ENCODE measurements at regions of chr1 and their contacts with region 1.

Region 1: GRCh38 chr1:236603991-236604904 is at the start of gene HEATR1:
- DNase-seq: peak; percentile 88 to 92
- H3K4me3 ChIP-seq: peak within 1 kb of the TSS; percentile 71
- H3K27ac ChIP-seq: peak within 1 kb of the TSS; percentile 30
- H3K4me1 ChIP-seq: peaks cover 8% of the 10 kb centered on the region
- H3K27me3 ChIP-seq: no peaks in the 10 kb centered on the region
- CTCF ChIP-seq: no peak
- total RNA-seq, gene HEATR1: 34.3 and 43.0 TPM in 2 replicates

Region 2: GRCh38 chr1:236103646-236104218 is 500.5 kb before region 1 on chr1:
- CTCF ChIA-PET with region 1: no interaction called
- POLR2A ChIA-PET with region 1: no interaction called
- intact Hi-C with region 1: loop called (anchors 1 kb)
- DNase-seq: peak in 1 of 2 experiments; percentile 41
- H3K4me3 ChIP-seq: no peak overlapping the region
- H3K27ac ChIP-seq: no peak overlapping the region
- H3K4me1 ChIP-seq: no peaks in the 10 kb centered on the region
- H3K27me3 ChIP-seq: no peaks in the 10 kb centered on the region
- CTCF ChIP-seq: peak; percentile 96

Region 3: GRCh38 chr1:236142253-236143103 is 461.8 kb before region 1 on chr1 and contains the start of gene GPR137B:
- CTCF ChIA-PET with region 1: no interaction called
- POLR2A ChIA-PET with region 1: no interaction called
- intact Hi-C with region 1: no loop called
- DNase-seq: no peak
- H3K4me3 ChIP-seq: no peak within 1 kb of the TSS
- H3K27ac ChIP-seq: no peak within 1 kb of the TSS
- H3K4me1 ChIP-seq: no peaks in the 10 kb centered on the region
- H3K27me3 ChIP-seq: peaks cover 42% of the 10 kb centered on the region
- CTCF ChIP-seq: no peak
- total RNA-seq, gene GPR137B: not detected in 2 replicates

Region 4: DNA sequence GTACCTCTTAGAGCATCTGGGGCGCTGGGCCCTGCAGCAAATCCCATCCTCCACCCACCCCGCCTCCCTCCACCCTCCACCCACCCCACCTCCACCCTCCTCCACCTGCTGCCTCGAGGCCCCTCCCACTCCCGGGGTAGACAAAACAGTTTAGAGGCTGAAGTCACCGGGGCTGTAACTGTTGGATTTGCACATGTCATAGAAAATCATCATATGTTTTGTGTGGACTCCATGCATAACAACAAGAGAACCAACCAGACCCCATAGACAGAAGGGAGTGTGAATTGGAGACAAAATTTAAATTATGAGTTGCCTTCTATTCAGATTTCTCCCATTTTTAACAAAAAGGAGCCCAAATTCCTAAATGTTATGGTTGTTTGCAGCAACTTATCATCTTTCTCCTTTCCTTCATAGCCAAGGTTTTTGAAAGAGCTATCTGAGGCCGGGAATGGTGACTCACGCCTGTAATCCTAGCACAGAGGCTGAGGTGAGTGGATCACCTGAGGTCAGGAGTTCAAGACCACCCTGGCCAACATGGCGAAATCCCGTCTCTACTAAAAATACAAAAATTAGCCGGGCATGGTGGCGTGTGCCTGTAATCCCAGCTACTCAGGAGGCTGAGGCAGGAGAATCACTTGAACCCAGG is 108.7 kb before region 1 on chr1:
- CTCF ChIA-PET with region 1: no interaction called
- POLR2A ChIA-PET with region 1: no interaction called
- intact Hi-C with region 1: no loop called
- DNase-seq: no peak
- H3K4me3 ChIP-seq: no peak overlapping the region
- H3K27ac ChIP-seq: no peak overlapping the region
- H3K4me1 ChIP-seq: peaks cover 35% of the 10 kb centered on the region
- H3K27me3 ChIP-seq: no peaks in the 10 kb centered on the region
- CTCF ChIP-seq: no peak

Region 5: DNA sequence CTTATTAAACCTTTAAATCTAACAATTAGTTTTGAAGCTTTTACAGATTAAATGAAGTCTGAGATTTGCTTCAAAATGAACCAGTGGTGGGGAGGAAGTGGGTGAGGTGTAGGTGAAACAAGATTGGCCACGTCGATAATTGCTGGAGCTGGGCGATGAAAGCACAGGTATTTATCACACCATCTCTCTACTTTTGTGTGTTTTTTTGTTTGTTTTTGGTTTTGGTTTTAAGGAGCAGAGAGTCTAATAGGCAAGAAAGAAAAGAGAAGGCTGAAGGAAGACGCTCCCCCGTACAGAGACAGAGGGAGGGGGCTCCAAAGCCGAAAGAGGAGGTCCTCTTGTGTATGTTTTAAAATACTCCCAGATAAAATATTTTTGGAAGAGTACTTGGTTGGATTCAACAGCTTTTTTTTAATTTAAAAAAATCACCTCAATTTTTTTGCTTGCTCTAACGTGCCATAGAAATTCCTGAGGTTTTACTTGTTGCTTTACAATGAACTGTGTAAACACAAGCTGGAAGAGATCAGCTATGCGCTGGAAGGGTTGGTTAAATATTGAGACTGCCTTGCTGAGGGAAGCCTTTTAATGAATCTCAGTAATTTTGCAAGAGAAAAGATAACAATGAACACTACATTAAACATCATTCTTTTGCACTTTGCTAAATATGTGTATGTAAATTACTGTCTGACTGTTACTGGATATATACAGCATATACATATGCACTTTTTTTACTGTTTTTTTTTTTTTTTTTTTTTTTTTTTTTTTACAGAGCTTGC is 87.1 kb before region 1 on chr1:
- CTCF ChIA-PET with region 1: no interaction called
- POLR2A ChIA-PET with region 1: interaction called, 39 read pairs
- intact Hi-C with region 1: no loop called
- DNase-seq: peak; percentile 38 to 97
- H3K4me3 ChIP-seq: peak overlapping the region; percentile 42; the same call in 1 of the 2 replicates
- H3K27ac ChIP-seq: peak overlapping the region; percentile 93
- H3K4me1 ChIP-seq: peaks cover 50% of the 10 kb centered on the region
- H3K27me3 ChIP-seq: no peaks in the 10 kb centered on the region
- CTCF ChIP-seq: no peak

Region 6: DNA sequence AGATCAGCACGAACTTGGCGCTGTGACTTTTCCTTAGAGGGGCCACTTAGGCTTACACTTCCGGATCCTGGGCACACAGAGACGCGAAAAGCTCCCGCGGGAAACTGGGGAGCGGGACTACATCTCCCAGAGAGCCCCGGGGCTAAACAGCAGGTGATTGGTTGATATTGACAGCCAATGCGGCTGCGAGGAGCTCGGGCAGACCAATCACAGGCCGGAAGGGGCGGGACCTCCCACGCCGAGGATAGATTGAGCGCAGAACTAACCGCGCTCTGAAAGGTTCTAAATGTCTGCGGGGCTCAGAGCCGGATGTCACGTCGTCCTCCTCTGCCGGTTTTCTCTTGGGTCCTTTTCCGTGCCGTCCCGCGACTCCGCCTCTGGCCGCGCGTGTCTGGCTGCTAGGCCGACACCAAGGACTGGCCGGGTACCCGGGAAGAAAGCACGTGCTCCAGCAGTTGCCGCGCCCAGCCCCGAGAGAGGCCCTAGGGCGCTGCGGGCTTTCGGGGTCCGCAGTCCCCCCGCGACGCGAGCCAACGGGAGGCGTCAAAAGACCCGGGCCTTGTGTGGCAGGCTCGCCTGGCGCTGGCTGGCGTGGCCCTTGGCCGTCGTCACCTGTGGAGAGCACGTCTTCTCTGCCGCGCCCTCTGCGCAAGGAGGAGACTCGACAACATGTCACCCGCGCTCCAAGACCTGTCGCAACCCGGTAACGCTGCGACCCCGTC is 190.9 kb after region 1 on chr1 and contains the start of gene MTR:
- CTCF ChIA-PET with region 1: interaction called, 7 read pairs
- POLR2A ChIA-PET with region 1: interaction called, 7 read pairs
- intact Hi-C with region 1: loop called (anchors 10 kb)
- DNase-seq: peak; percentile 94
- H3K4me3 ChIP-seq: peak within 1 kb of the TSS; percentile 86
- H3K27ac ChIP-seq: peak within 1 kb of the TSS; percentile 51; the same call in 1 of the 2 replicates
- H3K4me1 ChIP-seq: peaks cover 5% of the 10 kb centered on the region; the same call in 1 of the 2 replicates
- H3K27me3 ChIP-seq: peaks cover 23% of the 10 kb centered on the region
- CTCF ChIP-seq: no peak
- total RNA-seq, gene MTR: 20.9 and 21.9 TPM in 2 replicates

Region 7: GRCh38 chr1:236868625-236869467 is 264.6 kb after region 1 on chr1:
- CTCF ChIA-PET with region 1: no interaction called
- POLR2A ChIA-PET with region 1: no interaction called
- intact Hi-C with region 1: loop called (anchors 1 kb)
- DNase-seq: peak; percentile 19 to 49
- H3K4me3 ChIP-seq: no peak overlapping the region
- H3K27ac ChIP-seq: no peak overlapping the region
- H3K4me1 ChIP-seq: no peaks in the 10 kb centered on the region
- H3K27me3 ChIP-seq: no peaks in the 10 kb centered on the region
- CTCF ChIP-seq: peak; percentile 97

Region 8: GRCh38 chr1:237386362-237387143 is 782.3 kb after region 1 on chr1:
- CTCF ChIA-PET with region 1: interaction called, 3 read pairs
- POLR2A ChIA-PET with region 1: no interaction called
- intact Hi-C with region 1: loop called (anchors 1 kb)
- DNase-seq: no peak
- H3K4me3 ChIP-seq: no peak overlapping the region
- H3K27ac ChIP-seq: no peak overlapping the region
- H3K4me1 ChIP-seq: no peaks in the 10 kb centered on the region
- H3K27me3 ChIP-seq: peaks cover 34% of the 10 kb centered on the region
- CTCF ChIP-seq: peak; percentile 79

Region 9: DNA sequence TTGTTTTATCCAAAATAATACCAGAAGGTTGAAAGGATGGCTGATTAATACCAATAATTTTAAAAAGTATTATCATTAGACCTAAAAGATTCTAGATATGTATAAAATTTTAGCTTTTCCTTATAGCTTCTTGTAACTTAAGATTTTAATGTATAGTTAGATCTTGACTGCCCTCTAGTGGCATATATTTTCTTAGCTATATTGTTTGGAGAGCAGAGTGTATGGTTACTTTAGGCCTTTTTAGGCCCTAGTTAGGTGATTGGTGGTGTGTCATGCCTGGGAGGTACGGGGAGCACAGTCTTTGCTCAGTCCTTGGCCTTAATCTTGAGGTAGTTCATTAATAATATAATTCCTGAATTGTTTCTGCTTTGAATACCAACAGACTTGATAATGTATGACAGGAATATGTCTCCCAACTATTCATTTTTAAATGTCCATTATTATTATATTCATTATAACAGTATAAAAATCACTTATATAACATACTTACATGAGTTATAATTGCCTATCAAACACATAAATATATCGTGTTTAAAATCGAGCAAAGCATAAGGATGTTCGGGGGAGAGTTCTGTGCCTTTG is 958.1 kb after region 1 on chr1:
- CTCF ChIA-PET with region 1: interaction called, 3 read pairs
- POLR2A ChIA-PET with region 1: no interaction called
- intact Hi-C with region 1: loop called (anchors 1 kb)
- DNase-seq: peak in 1 of 2 experiments; percentile 69
- H3K4me3 ChIP-seq: no peak overlapping the region
- H3K27ac ChIP-seq: no peak overlapping the region
- H3K4me1 ChIP-seq: no peaks in the 10 kb centered on the region
- H3K27me3 ChIP-seq: no peaks in the 10 kb centered on the region
- CTCF ChIP-seq: peak; percentile 83

Measured in PC-9 (cell line).